Activated CD8-positive, alpha-beta memory T cell treated with anti-CD3 and anti-CD28 coated beads, Interleukin-2, amount 10 ng/mL, durations not matched to agents 7 days and 5 days (primary cell): ENCODE measurements at regions of chr17 and their contacts with region 1.

Region 1: DNA sequence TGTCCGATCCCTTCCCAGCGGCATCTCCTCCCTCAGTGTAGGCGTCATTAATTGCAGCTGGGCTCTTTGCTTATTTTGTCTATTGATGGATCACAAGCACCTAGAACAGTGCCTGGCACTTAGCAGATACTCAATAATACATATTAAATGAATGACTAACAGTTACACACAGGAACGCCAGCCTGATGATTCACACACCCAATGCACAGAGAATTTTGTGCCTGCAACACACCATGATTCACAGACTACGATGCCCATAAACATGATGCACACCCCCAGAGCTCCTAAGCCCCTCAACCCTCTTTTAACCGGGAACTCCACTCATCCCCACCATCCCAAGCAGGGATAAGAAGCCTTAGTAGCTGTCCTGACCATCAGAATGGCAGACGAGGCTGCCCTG is 66.6 kb upstream of the TMEM97 start:
- DNase-seq: no peak
- ATAC-seq: no peak
- H3K4me3 Mint-ChIP-seq: no peak overlapping the region
- H3K27ac Mint-ChIP-seq: no peak overlapping the region
- H3K4me1 Mint-ChIP-seq: peaks cover 7% of the 10 kb centered on the region
- H3K27me3 Mint-ChIP-seq: peaks cover 16% of the 10 kb centered on the region

Region 2: GRCh38 chr17:27834571-27834970 is 417.9 kb before region 1 on chr17:
- CTCF ChIA-PET with region 1: no interaction called
- DNase-seq: no peak
- ATAC-seq: no peak
- H3K4me3 Mint-ChIP-seq: no peak overlapping the region
- H3K27ac Mint-ChIP-seq: no peak overlapping the region
- H3K4me1 Mint-ChIP-seq: no peaks in the 10 kb centered on the region
- H3K27me3 Mint-ChIP-seq: peaks cover 2% of the 10 kb centered on the region

Region 3: DNA sequence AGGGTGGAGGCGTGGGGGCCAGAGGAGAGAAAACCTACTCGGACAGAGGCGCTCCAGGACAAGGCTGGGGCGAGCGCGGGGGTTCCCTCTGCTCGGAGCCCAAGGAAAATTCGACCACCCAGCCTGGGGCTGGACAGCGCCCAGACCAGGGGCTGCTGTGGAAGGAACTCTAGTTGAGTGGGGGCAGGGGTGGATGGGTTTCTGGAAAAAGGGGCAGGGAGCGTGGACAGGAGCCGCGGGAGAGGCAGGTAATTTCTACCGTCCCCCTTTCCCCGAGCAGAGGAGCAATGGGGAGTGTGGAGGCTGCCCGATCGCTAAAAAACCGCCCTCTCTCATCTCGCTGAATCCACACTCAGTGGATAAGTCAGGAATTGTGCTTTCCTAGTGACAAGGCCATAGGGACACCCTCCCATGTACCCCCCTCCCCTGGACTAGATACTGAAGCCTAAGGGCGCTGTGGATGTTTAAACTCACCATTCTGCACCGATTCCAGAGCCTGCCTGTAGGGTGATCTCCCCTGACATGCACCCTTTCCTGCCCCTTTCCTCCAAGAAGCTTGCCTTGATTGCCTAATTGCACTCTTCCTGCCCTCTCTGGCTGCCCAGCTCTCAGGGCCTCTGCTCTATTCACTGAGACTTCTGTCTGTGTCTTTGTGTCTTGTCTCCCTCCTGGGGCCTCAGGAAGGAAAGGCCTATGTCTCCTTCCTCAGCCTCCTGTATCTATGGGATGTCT is 24.1 kb before region 1 on chr17:
- CTCF ChIA-PET with region 1: interaction called, 55 read pairs
- DNase-seq: no peak
- ATAC-seq: no peak
- H3K4me3 Mint-ChIP-seq: peak overlapping the region; percentile 66
- H3K27ac Mint-ChIP-seq: no peak overlapping the region
- H3K4me1 Mint-ChIP-seq: peaks cover 27% of the 10 kb centered on the region
- H3K27me3 Mint-ChIP-seq: peaks cover 57% of the 10 kb centered on the region

Region 4: GRCh38 chr17:28371245-28372202 is 119.1 kb after region 1 on chr17 and contains the start of gene SARM1:
- CTCF ChIA-PET with region 1: no interaction called
- DNase-seq: peak; percentile 96
- ATAC-seq: peak; percentile 96
- H3K4me3 Mint-ChIP-seq: peak within 1 kb of the TSS; percentile 82
- H3K27ac Mint-ChIP-seq: peak within 1 kb of the TSS; percentile 77
- H3K4me1 Mint-ChIP-seq: peaks cover 20% of the 10 kb centered on the region
- H3K27me3 Mint-ChIP-seq: no peaks in the 10 kb centered on the region
- total RNA-seq, gene SARM1: 20.2 to 24.8 TPM

Region 5: DNA sequence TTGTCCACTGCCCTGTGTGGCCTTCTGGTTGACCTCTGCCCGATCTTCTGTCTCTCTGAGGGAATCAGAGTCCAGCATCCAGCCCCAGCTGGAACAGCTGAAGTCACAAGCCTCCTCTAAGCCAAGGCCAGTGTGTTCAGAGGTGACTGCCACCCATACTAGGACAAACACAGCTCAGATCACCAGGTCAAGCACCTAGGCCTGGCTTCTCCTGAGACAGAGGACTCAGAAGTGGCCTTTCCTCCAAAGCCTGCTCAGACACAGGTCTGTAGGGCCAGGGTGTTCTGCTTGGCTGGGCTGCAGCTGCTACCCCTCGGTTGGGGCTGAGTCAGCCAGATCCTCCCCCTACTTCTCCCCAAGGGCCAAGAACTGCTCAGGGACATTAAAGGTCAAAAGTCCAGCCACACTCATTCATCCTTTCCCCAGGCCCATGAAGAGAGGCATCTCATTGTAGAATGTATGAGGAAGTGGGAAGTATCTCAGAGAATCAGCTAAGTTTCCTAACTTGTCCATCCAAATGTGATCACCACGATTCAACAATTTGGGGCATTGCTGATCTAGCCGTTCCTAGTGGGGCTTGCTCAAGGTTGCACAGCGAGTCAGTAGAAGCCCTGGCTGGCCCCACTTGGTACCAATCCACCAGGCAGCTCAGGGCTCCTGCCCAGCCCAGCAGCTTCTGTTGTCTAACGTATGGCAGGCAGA is 146.0 kb after region 1 on chr17:
- CTCF ChIA-PET with region 1: no interaction called
- DNase-seq: no peak
- ATAC-seq: no peak
- H3K4me3 Mint-ChIP-seq: no peak overlapping the region
- H3K27ac Mint-ChIP-seq: no peak overlapping the region
- H3K4me1 Mint-ChIP-seq: peaks cover 24% of the 10 kb centered on the region
- H3K27me3 Mint-ChIP-seq: no peaks in the 10 kb centered on the region